GM12878 (cell line): ENCODE measurements at regions of chr11 and their contacts with region 1.

Region 1: DNA sequence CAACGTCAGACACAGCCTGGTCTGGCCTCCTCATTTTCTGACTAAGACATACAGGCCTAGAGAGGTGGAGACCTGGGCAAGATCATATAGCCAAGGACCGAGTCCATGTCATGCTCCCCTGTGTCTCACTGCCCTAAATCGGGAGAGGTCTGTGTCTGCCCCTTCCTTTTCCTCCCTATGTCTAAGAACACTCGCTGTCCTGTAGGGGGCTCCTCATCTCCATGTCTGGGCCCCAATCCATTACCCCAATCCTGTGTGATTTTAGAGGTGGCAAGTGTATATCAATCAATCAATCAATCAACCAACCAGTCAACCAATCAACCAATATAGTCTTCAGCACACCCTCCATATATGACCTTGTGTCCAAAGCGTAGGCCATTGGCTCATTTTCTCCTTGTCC is 125.7 kb downstream of the KIRREL3 start:
- DNase-seq: no peak
- ATAC-seq: peak; percentile 56
- H3K4me3 ChIP-seq: no peak overlapping the region
- H3K27ac ChIP-seq: no peak overlapping the region
- H3K4me1 ChIP-seq: no peaks in the 10 kb centered on the region
- H3K27me3 ChIP-seq: no peaks in the 10 kb centered on the region; a peak in 2 of 4 replicates
- CTCF ChIP-seq: peak; percentile 21 to 35 (median 32); a peak in 2 of 6 replicates
- EP300 ChIP-seq: no peak
- POLR2A ChIP-seq: no peak
- RAD21 ChIP-seq: 0 out of 2 replicates have a peak, but pooled peaks have one; percentile 20

Region 2: GRCh38 chr11:126989942-126990715 is 115.3 kb after region 1 on chr11:
- CTCF ChIA-PET with region 1: interaction called, 4 read pairs
- POLR2A ChIA-PET with region 1: no interaction called
- RAD21 ChIA-PET with region 1: no interaction called
- SMC1A ChIA-PET with region 1: no interaction called
- in situ Hi-C with region 1: no loop called
- intact Hi-C with region 1: loop called (anchors 5 kb)
- DNase-seq: no peak
- ATAC-seq: peak; percentile 98
- H3K4me3 ChIP-seq: no peak overlapping the region
- H3K27ac ChIP-seq: no peak overlapping the region
- H3K4me1 ChIP-seq: no peaks in the 10 kb centered on the region
- H3K27me3 ChIP-seq: peaks cover 0 to 12% of the 10 kb centered on the region in 2 experiments; a peak in 3 of 4 replicates
- CTCF ChIP-seq: peak; percentile 94 to 98 (median 94)
- EP300 ChIP-seq: no peak
- POLR2A ChIP-seq: no peak
- RAD21 ChIP-seq: peak; percentile 90